IMR-90 (cell line): ENCODE measurements at regions of chr3 and their contacts with region 1.

Region 1: GRCh38 chr3:146160964-146161662 is at the start of gene PLOD2:
- DNase-seq: peak; percentile 92
- ATAC-seq: peak; percentile 76
- H3K4me3 ChIP-seq: peak within 1 kb of the TSS; percentile 91
- H3K27ac ChIP-seq: peak within 1 kb of the TSS; percentile 94
- H3K4me1 ChIP-seq: peaks cover 20% of the 10 kb centered on the region
- H3K27me3 ChIP-seq: no peaks in the 10 kb centered on the region
- CTCF ChIP-seq: 0 out of 2 replicates have a peak, but pooled peaks have one; percentile 15
- POLR2A ChIP-seq: peak; percentile 97
- RAD21 ChIP-seq: 0 out of 2 replicates have a peak, but pooled peaks have one; percentile 2
- total RNA-seq, gene PLOD2: 117 and 225 TPM in 2 replicates

Region 2: DNA sequence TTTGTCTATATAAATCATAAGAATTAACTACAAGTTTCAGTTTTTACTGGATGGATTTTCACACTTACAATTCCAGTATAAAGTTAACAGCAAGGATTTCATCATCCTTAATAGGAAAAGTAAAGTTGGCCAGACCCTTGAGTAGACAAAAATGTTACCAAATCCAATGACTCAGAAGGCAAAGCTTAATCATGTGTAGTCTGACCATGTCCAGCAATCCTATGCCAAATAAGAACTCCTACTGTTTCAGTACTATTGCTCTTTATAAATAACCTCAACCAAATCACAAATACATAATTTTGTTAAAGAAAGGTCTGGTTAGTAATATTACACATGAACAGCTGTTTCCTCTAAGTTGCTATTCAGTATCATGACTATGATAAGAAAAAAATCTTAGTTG is 35.2 kb before region 1 on chr3:
- CTCF ChIA-PET with region 1: no interaction called
- POLR2A ChIA-PET with region 1: no interaction called
- dilution Hi-C with region 1: no loop called
- in situ Hi-C with region 1: no loop called
- intact Hi-C with region 1: loop called (anchors 5 kb)
- DNase-seq: peak; percentile 94
- ATAC-seq: peak; percentile 75
- H3K4me3 ChIP-seq: no peak overlapping the region
- H3K27ac ChIP-seq: no peak overlapping the region
- H3K4me1 ChIP-seq: peaks cover 4% of the 10 kb centered on the region
- H3K27me3 ChIP-seq: no peaks in the 10 kb centered on the region
- CTCF ChIP-seq: no peak
- POLR2A ChIP-seq: no peak
- RAD21 ChIP-seq: no peak

Region 3: DNA sequence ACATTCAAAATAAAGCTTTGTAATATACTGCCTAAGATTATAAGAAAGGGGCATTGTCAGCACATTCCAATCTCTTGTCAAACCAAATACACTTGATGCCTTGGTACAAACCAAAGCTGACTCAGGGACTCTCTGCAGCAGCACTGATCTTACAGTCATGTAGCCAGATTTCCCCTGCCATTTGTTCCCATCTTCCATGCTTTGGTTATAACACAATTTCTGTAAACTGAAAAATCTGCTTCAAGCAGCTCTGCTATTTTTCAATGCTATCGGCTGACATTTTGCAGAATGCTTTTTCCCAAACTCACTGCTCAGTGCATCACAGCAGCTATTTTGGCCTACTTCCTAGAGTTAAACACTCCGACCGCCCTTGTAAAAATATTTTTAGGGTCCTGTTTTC is 18.4 kb before region 1 on chr3:
- CTCF ChIA-PET with region 1: interaction called, 4 read pairs
- POLR2A ChIA-PET with region 1: interaction called, 3 read pairs
- dilution Hi-C with region 1: no loop called
- in situ Hi-C with region 1: no loop called
- intact Hi-C with region 1: loop called (anchors 2 kb)
- DNase-seq: peak; percentile 80
- ATAC-seq: peak; percentile 80
- H3K4me3 ChIP-seq: no peak overlapping the region
- H3K27ac ChIP-seq: no peak overlapping the region
- H3K4me1 ChIP-seq: peaks cover 17% of the 10 kb centered on the region
- H3K27me3 ChIP-seq: no peaks in the 10 kb centered on the region
- CTCF ChIP-seq: no peak
- POLR2A ChIP-seq: no peak
- RAD21 ChIP-seq: no peak

Region 4: GRCh38 chr3:146189519-146190173 is 28.5 kb after region 1 on chr3:
- CTCF ChIA-PET with region 1: interaction called, 6 read pairs
- POLR2A ChIA-PET with region 1: no interaction called
- dilution Hi-C with region 1: no loop called
- in situ Hi-C with region 1: no loop called
- intact Hi-C with region 1: loop called (anchors 1 kb)
- DNase-seq: peak; percentile 64
- ATAC-seq: peak; percentile 95
- H3K4me3 ChIP-seq: no peak overlapping the region
- H3K27ac ChIP-seq: no peak overlapping the region
- H3K4me1 ChIP-seq: no peaks in the 10 kb centered on the region
- H3K27me3 ChIP-seq: no peaks in the 10 kb centered on the region
- CTCF ChIP-seq: peak; percentile 79
- POLR2A ChIP-seq: no peak
- RAD21 ChIP-seq: peak; percentile 83